GM10248 (cell line): ENCODE measurements at regions of chr7 and their contacts with region 1.

Region 1: DNA sequence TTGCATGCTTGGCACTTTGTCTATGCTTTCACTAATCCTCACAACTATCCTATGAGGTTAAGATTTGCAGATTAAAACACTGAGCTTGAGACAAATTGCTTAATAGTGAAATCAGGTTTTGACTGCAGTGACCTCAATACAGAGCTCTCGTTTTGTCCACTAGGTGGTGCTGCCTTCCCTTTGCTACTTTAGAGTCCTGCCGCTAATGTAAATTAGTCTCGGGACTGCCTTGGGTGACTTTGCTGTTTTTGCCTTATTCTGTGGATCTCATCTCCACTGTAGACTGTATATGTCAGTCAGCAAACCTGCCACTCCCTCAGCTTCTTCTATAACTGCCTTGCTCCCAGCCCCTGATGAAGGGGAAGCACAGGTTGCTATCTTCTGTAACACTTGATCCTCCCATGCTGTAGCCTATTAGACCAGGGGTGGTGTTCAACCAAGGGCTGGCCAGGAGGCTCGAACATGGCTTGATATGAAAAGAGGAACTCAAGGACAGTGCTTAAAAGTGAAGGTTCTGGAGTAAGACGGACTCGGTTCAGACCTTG is 26.0 kb downstream of the ASB4 start:
- DNase-seq: peak; percentile 41
- CTCF ChIP-seq: peak; percentile 88

Region 2: GRCh38 chr7:95476904-95477594 is 34.7 kb before region 1 on chr7:
- CTCF ChIA-PET with region 1: interaction called, 71 read pairs
- POLR2A ChIA-PET with region 1: no interaction called
- DNase-seq: peak; percentile 37
- CTCF ChIP-seq: peak; percentile 76

Region 3: DNA sequence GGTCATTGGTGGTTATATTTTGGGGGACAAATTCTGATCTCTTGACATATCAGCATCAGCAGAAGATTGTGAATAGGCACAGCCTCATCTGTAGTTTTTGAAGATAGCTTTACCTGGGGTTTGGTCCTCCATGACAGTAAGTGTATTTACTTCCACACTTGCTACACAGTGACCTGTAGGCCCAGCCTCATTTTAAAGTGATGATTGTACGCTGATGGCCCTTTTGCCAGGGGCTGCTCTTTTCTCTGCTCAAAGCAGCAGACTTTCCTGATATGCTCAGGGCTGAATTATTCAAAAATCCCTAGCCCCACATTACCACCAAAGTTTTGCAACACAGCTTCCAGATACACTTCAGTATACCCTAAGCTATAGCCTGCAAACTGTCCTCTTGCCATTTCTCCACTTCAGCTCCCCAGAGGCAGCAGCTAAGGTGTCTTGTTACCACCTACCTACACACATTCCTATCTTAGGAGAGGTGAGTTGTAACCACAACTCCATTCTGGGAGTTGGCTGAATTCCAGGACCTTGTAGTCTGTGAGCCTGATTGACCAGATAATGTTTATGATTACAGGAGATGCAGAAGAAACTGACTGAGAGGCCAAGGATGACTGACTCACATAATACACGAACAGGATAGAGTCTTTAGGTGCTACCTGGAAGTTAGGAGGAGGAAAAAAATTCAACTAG is 20.0 kb before region 1 on chr7:
- CTCF ChIA-PET with region 1: interaction called, 35 read pairs
- POLR2A ChIA-PET with region 1: no interaction called
- DNase-seq: no peak
- CTCF ChIP-seq: no peak

Region 4: GRCh38 chr7:95527033-95527775 is 15.4 kb after region 1 on chr7:
- CTCF ChIA-PET with region 1: interaction called, 33 read pairs
- POLR2A ChIA-PET with region 1: no interaction called
- DNase-seq: peak; percentile 64
- CTCF ChIP-seq: peak; percentile 82

Region 5: GRCh38 chr7:95684037-95684436 is 172.2 kb after region 1 on chr7:
- CTCF ChIA-PET with region 1: interaction called, 198 read pairs
- POLR2A ChIA-PET with region 1: no interaction called
- DNase-seq: no peak
- CTCF ChIP-seq: peak; percentile 29

Region 6: DNA sequence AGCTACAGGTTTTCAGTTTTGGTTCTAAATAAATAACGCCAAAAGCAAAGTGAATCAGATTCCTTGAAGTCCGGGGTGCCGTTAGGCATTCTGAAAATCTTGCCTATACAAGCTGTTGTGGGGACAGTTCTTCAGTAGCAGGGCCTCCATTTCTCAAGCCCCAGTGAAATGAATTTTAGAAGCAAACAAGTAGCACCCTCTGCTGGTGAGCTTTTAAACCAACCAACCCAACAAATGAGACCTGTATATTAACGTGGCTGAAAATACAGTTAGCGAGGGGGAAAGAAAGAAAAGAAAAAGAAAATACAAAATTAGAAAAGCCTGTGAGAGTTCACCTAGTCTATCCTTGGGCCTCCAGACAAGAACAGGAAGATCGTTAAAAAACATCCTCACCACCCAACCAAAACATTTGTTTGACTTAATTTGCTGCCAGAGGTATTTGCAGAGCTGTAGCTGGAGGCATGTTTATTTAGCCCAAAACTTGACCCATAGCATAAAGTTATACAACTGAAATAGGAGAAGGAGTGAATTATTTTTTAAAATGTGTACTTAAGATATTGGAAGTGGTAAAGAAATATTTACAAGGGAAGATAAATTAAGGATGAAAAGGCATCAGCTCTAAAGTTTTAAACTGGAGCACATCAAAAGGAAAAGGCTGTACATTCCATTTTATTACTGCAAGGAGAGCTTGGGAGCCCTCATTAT is 359.4 kb after region 1 on chr7:
- CTCF ChIA-PET with region 1: interaction called, 33 read pairs
- POLR2A ChIA-PET with region 1: no interaction called
- DNase-seq: peak; percentile 49
- CTCF ChIP-seq: peak; percentile 55